Ovary (tissue), 10 donors: ENCODE measurements at regions of chr14 and their contacts with region 1.

Region 1: GRCh38 chr14:34496679-34497513 is 34.9 kb upstream of the SPTSSA start:
- DNase-seq: peak; percentile 87 to 93 (median 90)
- H3K4me3 ChIP-seq: no peak overlapping the region
- H3K27ac ChIP-seq: peak overlapping the region; percentile 79 to 90
- H3K4me1 ChIP-seq: peaks cover 12% of the 10 kb centered on the region
- H3K27me3 ChIP-seq: no peaks in the 10 kb centered on the region
- CTCF ChIP-seq: peak in 2 of 3 donors; percentile 14 to 21
- EP300 ChIP-seq: peak; percentile 96
- POLR2A ChIP-seq: peak; percentile 60

Region 2: GRCh38 chr14:34409721-34410120 is 87.2 kb before region 1 on chr14:
- intact Hi-C with region 1: no loop called
- DNase-seq: no peak
- H3K4me3 ChIP-seq: no peak overlapping the region
- H3K27ac ChIP-seq: no peak overlapping the region
- H3K4me1 ChIP-seq: no peaks in the 10 kb centered on the region
- H3K27me3 ChIP-seq: no peaks in the 10 kb centered on the region
- CTCF ChIP-seq: no peak
- EP300 ChIP-seq: no peak
- POLR2A ChIP-seq: no peak

Region 3: GRCh38 chr14:34461334-34462131 is 35.4 kb before region 1 on chr14:
- intact Hi-C with region 1: loop called in 1 of 4 experiments (anchors 5 kb)
- DNase-seq: peak in 4 of 5 donors; percentile 42 to 64 (median 58)
- H3K4me3 ChIP-seq: peak overlapping the region; percentile 57
- H3K27ac ChIP-seq: peak overlapping the region; percentile 87 to 92
- H3K4me1 ChIP-seq: peaks cover 4% of the 10 kb centered on the region
- H3K27me3 ChIP-seq: no peaks in the 10 kb centered on the region
- CTCF ChIP-seq: no peak
- EP300 ChIP-seq: no peak
- POLR2A ChIP-seq: no peak

Region 4: DNA sequence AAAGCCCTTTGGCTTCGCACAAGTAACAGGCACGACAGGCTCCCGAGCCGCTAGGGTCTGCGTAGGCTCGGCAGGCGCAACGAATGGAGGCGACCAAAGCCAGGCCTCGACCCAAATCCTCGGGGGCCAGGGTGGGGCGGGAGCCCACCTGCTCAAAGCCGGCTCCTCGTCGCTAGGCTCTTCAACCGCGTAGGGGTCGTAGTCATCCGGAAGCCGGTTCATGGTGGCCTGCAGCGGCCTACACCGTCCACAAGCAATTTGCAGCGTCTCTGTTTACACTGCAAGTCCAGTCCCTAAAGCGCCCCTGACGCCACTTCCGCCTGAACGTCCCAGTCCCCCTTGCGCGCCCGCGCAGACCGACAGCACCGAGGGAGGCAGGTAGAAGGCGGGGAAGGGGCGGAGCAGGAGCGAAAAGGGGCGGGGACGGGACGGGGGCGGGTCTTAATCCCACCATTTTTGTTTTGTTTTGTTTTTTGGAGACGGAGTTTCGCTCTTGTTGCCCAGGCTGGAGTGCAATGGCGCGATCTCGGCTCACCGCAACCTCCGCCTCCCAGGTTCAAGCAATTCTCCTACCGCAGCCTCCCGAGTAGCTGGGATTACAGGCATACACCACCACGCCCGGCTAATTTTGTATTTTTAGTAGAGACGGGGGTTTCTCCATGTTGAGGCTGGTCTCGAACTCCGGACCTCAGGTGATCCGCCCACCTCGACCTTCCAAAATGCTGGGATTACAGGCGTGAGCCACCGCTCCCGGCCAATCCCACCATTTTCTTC is 42.7 kb after region 1 on chr14 and contains the start of gene EAPP:
- intact Hi-C with region 1: loop called in 1 of 4 experiments (anchors 5 kb)
- DNase-seq: peak; percentile 96 to 98 (median 98)
- H3K4me3 ChIP-seq: peak within 1 kb of the TSS; percentile 74
- H3K27ac ChIP-seq: peak within 1 kb of the TSS; percentile 84 to 93
- H3K4me1 ChIP-seq: peaks cover 6% of the 10 kb centered on the region
- H3K27me3 ChIP-seq: no peaks in the 10 kb centered on the region
- CTCF ChIP-seq: no peak
- EP300 ChIP-seq: peak; percentile 8
- POLR2A ChIP-seq: peak; percentile 93
- total RNA-seq, gene EAPP: 41.1 to 53.8 (median 47.0) TPM

Region 5: GRCh38 chr14:34554540-34555333 is 57.8 kb after region 1 on chr14:
- intact Hi-C with region 1: no loop called
- DNase-seq: peak in 2 of 5 donors; percentile 6 to 15
- H3K4me3 ChIP-seq: no peak overlapping the region
- H3K27ac ChIP-seq: peak overlapping the region; percentile 14 to 44
- H3K4me1 ChIP-seq: no peaks in the 10 kb centered on the region
- H3K27me3 ChIP-seq: no peaks in the 10 kb centered on the region
- CTCF ChIP-seq: no peak
- EP300 ChIP-seq: no peak
- POLR2A ChIP-seq: no peak